GM12878 (cell line): ENCODE measurements at regions of chr1 and their contacts with region 1.

Region 1: DNA sequence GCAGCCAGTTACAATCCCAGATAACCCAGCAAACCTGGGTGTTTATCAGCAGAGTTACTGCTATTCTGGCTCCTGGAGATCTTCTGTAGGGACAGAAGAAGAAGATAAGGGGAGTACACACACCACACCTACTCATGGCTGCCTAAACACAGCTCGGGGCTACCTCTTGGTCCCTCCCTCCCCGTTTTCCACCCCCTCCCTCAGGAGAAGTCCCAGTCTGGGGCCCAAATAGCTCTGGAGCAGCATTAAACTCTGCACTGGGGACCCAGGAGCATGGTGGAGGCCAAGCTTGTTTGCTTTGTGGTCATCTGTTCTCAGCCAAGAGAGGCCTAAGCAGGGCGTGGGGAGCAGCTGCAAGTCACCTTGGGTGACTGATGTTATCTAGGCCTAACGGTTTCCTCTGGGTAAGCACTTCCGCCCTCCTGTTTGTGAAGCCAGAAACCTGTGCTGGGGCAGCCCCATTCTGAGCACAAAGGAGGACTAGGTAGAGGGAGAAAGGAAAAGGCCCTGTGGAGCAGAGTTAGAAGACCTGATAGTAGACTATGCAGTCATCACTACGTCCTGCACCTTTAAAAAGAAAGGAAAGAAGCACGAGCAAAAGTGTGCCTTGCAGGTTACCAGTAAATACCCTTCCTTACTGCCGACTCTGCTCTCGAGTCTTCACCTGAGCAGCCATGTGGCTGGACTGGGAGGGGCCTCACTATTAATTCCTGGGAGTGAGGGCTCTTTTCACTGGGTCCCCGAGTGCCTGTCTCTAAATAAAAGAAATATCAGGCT is 2.0 kb upstream of the RCSD1 start:
- DNase-seq: peak; percentile 89
- ATAC-seq: peak; percentile 77
- H3K4me3 ChIP-seq: peak overlapping the region; percentile 79
- H3K27ac ChIP-seq: peak overlapping the region; percentile 94
- H3K4me1 ChIP-seq: peaks cover 26% of the 10 kb centered on the region
- H3K27me3 ChIP-seq: no peaks in the 10 kb centered on the region
- CTCF ChIP-seq: no peak
- EP300 ChIP-seq: peak; percentile 80 to 84
- POLR2A ChIP-seq: peak; percentile 89
- RAD21 ChIP-seq: no peak

Region 2: DNA sequence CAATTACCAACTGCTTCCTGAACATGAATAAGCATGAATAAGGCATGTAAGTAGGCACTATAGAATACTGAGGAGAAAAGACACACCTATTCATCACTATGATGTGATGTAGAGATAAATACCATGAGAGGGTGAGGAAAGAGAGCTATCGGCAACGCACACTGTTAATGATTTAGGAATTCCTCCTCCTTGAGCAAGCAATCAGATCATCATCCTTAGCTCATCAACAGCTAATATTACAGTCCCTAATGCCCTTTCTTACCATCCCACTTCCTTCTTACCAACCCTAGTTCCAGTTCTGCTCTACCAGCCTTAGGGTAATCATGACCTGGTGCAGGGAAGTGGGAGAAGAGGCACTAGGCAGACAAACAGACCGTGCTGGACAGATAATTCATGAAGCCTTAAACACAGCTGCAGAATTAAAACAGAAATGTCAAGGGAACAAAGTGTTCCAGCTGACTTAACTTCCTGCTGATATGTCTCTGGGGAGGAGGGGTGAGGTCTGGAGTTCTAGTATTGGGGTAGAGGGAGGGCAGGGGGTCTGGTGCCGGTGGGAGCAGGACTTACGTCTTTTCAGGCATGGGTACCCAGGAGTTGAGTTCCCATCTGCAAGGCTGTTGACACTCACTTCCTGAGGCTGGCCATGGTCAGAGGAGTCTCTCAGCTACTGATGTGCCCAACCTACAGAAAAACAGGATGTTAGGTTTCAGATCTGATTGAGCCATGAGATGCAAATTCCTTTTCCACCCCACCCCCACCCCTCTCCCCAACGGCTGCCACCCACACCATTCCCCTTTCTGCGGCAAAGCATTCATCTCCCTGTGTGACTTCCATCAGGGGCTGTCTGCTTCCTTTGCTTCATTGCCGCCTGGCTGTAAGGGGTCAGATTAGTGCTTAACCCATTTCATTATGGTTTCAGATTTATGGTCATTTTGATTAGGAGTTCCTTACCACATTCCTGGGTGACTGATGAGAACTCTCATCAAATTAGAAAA is 10.6 kb before region 1 on chr1:
- CTCF ChIA-PET with region 1: interaction called, 5 read pairs
- POLR2A ChIA-PET with region 1: interaction called, 29 read pairs
- RAD21 ChIA-PET with region 1: interaction called, 35 read pairs
- SMC1A ChIA-PET with region 1: interaction called, 39 read pairs
- in situ Hi-C with region 1: no loop called
- intact Hi-C with region 1: loop called (anchors 1 kb)
- DNase-seq: peak; percentile 74
- ATAC-seq: peak; percentile 87
- H3K4me3 ChIP-seq: peak overlapping the region; percentile 62
- H3K27ac ChIP-seq: peak overlapping the region; percentile 70
- H3K4me1 ChIP-seq: peaks cover 22% of the 10 kb centered on the region
- H3K27me3 ChIP-seq: no peaks in the 10 kb centered on the region
- CTCF ChIP-seq: no peak
- EP300 ChIP-seq: no peak
- POLR2A ChIP-seq: peak; percentile 58
- RAD21 ChIP-seq: no peak

Region 3: GRCh38 chr1:167669209-167670124 is 41.4 kb after region 1 on chr1:
- CTCF ChIA-PET with region 1: interaction called, 6 read pairs
- POLR2A ChIA-PET with region 1: interaction called, 84 read pairs
- RAD21 ChIA-PET with region 1: interaction called, 100 read pairs
- SMC1A ChIA-PET with region 1: interaction called, 170 read pairs
- in situ Hi-C with region 1: no loop called
- intact Hi-C with region 1: no loop called
- DNase-seq: peak; percentile 66
- ATAC-seq: peak; percentile 73
- H3K4me3 ChIP-seq: no peak overlapping the region
- H3K27ac ChIP-seq: peak overlapping the region; percentile 71
- H3K4me1 ChIP-seq: peaks cover 79% of the 10 kb centered on the region
- H3K27me3 ChIP-seq: no peaks in the 10 kb centered on the region
- CTCF ChIP-seq: 0 out of 6 replicates have a peak, but pooled peaks of 1 of the 3 experiments have one; percentile 3
- EP300 ChIP-seq: no peak
- POLR2A ChIP-seq: no peak
- RAD21 ChIP-seq: no peak

Region 4: DNA sequence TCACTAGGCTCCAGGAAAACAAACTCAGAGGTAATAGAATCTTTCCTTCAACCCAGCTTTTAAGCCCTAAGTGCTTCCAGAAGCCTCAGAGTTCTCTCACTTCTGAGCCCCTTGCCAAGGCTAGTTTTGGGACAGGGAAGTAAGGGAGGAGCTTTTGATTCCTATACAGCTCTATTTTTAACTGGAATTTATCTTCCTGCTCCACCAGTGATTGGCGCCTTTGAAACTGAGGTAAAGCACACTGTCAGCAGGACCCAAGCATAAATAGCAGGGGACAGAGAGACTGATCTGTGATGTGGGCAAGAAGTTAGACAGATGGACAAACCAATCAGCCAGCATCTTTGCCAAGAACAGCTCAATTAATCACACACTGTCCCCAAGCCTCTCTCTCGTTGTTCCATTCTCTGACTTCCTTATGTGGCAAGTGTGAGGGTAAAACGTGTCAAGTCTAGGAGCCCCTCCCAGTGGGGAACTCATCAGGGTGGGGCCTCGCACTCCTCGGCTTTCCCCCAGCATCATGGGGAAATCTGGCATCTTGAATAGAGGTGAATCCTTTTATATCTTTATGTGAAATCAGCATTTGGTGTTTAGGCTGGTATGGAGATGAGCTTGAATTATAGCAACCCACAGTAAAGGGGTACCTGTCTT is 53.5 kb after region 1 on chr1:
- CTCF ChIA-PET with region 1: interaction called, 67 read pairs
- POLR2A ChIA-PET with region 1: interaction called, 84 read pairs
- RAD21 ChIA-PET with region 1: interaction called, 100 read pairs
- SMC1A ChIA-PET with region 1: interaction called, 170 read pairs
- in situ Hi-C with region 1: no loop called
- intact Hi-C with region 1: loop called (anchors 1 kb)
- DNase-seq: no peak
- ATAC-seq: peak; percentile 16; the same call in 2 of the 3 replicates
- H3K4me3 ChIP-seq: no peak overlapping the region
- H3K27ac ChIP-seq: peak overlapping the region; percentile 36
- H3K4me1 ChIP-seq: peaks cover 49% of the 10 kb centered on the region
- H3K27me3 ChIP-seq: no peaks in the 10 kb centered on the region
- CTCF ChIP-seq: no peak
- EP300 ChIP-seq: no peak
- POLR2A ChIP-seq: no peak
- RAD21 ChIP-seq: no peak